Motor neuron (in vitro differentiated cells): ENCODE measurements at regions of chr10 and their contacts with region 1.

Region 1: GRCh38 chr10:63711867-63712716 is 190.9 kb downstream of the REEP3 start:
- ATAC-seq: peak; percentile 39 to 86 (median 66)
- H3K4me3 ChIP-seq: no peak overlapping the region
- H3K27ac ChIP-seq: peak overlapping the region; percentile 7 to 26
- H3K4me1 ChIP-seq: peaks cover 23 to 38% of the 10 kb centered on the region in 2 donors

Region 2: GRCh38 chr10:63021225-63021624 is 690.9 kb before region 1 on chr10:
- in situ Hi-C with region 1: no loop called
- ATAC-seq: no peak
- H3K4me3 ChIP-seq: no peak overlapping the region
- H3K27ac ChIP-seq: no peak overlapping the region
- H3K4me1 ChIP-seq: no peaks in the 10 kb centered on the region

Region 3: DNA sequence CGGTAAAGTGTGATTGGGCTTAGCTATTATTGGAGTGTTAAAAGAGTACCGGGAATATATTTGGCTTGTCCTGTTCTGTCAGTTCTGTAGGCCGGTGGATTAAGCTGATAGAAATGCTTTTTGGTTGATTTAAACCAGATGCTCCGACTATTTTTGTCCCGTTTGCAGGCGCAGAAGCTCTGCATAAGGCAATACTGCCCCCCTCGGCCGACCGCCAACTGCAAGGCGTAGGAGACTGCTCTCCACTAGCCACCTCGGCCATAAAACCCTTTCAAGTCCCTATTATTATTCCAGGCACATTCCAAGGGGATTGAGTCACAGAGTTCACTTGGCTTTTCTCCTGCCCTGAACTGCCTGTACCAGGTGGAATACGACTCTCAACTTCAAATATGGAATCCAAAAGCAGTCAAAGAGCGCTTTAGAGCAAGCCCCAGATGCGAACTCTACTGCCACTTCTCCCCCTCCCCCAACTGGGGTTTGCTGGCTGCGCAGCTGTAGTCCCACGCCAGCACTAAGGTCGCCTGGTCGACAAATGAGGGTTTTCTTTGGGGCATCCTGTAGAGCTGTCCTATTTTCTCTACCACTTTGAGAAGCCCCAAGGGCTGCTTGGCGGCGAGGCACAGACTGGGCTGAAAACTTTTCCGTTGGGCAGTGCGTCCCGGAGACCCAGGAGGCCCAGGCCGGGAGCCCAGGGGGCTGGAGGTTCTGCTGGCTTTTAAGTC is 82.6 kb before region 1 on chr10:
- in situ Hi-C with region 1: loop called in 1 of 9 experiments (anchors 10 kb)
- ATAC-seq: peak; percentile 52 to 76 (median 69)
- H3K4me3 ChIP-seq: peak overlapping the region; percentile 56 to 95 (median 83)
- H3K27ac ChIP-seq: peak overlapping the region; percentile 88 to 91
- H3K4me1 ChIP-seq: peaks cover 7 to 23% of the 10 kb centered on the region in 2 donors